ENCODE measurements at regions of chr14 and their contacts with region 1.

Region 1: GRCh38 chr14:52735921-52736489 is 6.0 kb downstream of the STYX start:
- DNase-seq: no peak
- H3K4me3 ChIP-seq: no peak overlapping the region
- H3K27ac ChIP-seq: no peak overlapping the region
- H3K4me1 ChIP-seq: peaks cover 15 to 34% (median 17%) of the 10 kb centered on the region in 4 donors
- H3K27me3 ChIP-seq: no peaks in the 10 kb centered on the region
- CTCF ChIP-seq: no peak
- EP300 ChIP-seq: no peak
- POLR2A ChIP-seq: no peak

Region 2: GRCh38 chr14:52789118-52789517 is 53.1 kb after region 1 on chr14:
- intact Hi-C with region 1: loop called (anchors 5 kb)
- DNase-seq: no peak
- H3K4me3 ChIP-seq: no peak overlapping the region
- H3K27ac ChIP-seq: no peak overlapping the region
- H3K4me1 ChIP-seq: peaks cover 7 to 28% (median 25%) of the 10 kb centered on the region in 4 donors
- H3K27me3 ChIP-seq: no peaks in the 10 kb centered on the region
- CTCF ChIP-seq: no peak
- EP300 ChIP-seq: no peak
- POLR2A ChIP-seq: no peak

Region 3: GRCh38 chr14:53450871-53451270 is 714.9 kb after region 1 on chr14:
- intact Hi-C with region 1: no loop called
- DNase-seq: no peak
- H3K4me3 ChIP-seq: no peak overlapping the region
- H3K27ac ChIP-seq: no peak overlapping the region
- H3K4me1 ChIP-seq: peaks cover 0 to 3% (median 0%) of the 10 kb centered on the region in 4 donors
- H3K27me3 ChIP-seq: no peaks in the 10 kb centered on the region
- CTCF ChIP-seq: no peak
- EP300 ChIP-seq: no peak
- POLR2A ChIP-seq: no peak